Head of caudate nucleus (tissue), 42 donors: ENCODE measurements at regions of chr5 and their contacts with region 1.

Region 1: DNA sequence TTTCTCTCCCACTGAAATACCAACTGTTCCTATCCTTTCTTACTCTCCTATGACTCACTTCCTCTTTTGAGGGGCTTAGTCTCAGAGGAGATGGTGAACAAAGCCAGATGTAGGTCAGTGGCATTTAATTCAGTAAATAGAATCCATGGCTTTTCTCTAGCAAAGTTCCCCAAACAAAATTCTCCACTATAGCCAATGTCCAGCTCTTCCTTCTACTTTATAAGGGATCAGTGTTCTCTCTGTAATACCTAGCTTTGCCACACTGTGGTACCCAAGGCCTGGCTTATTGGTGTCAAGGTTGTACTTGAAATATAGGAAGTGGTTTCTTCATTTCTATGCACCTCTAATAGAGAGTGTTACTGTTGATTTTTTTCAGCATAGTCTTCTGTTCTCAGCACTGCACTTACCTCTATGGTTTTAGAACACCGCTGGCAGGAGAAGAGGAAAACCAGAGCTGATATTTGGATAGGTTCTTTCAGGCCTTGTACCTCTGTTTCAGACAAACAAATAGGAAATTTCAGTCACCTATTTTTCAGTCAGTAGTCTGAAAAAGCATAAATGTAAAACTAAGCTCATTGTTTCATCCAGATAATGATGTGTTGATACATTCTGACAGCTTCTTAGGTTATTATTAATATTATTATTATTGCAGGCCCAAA is 40.6 kb upstream of the ITGA2 start:
- DNase-seq: peak in 41 of 42 donors; percentile 25 to 89 (median 65)

Region 2: DNA sequence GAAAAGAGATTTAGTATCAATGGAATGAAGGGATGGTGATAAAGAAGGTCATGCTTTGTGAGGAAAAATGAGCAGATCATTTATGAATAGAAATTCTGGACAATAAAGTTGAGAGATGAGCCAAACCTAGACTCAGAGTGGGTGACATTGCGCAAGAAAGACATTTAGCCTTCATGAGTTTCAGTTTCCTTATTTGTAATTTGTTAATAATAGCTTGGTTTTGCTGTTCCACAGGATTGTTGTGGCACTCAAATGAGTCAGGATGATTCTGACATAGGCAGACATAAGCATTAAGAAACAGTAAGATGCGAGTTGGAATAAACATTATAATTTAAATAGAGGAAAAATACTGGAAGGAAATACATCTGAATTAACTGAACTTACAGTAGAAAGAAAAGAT is 75.4 kb after region 1 on chr5:
- intact Hi-C with region 1: no loop called
- DNase-seq: no peak

Region 3: GRCh38 chr5:53095931-53096525 is 147.5 kb after region 1 on chr5:
- intact Hi-C with region 1: loop called (anchors 5 kb)
- DNase-seq: peak in 39 of 42 donors; percentile 9 to 92 (median 74)

Region 4: DNA sequence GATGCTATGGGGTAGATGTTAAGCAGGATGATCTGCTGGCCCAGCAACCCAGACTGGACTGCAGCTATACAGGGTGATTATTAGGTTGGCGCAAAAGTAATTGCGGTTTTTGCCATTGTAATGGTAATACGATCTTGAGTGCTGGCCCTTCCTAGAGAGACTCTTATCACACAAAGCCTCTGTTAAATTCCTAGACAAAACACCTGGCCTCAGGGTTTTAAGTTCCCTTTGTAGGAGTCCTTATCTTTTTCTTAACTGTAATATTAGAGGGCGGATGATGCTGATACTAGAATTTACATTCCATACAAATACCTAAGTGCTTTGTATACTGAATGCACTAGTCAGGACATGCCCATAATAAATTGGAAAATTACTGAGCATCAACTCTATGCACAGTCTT is 834.1 kb after region 1 on chr5:
- intact Hi-C with region 1: no loop called
- DNase-seq: no peak